Head of caudate nucleus (tissue), 42 donors: ENCODE measurements at regions of chr20 and their contacts with region 1.

Region 1: GRCh38 chr20:57596998-57597939 is 23.0 kb downstream of the ZBP1 start:
- DNase-seq: peak; percentile 45 to 89 (median 75)

Region 2: GRCh38 chr20:57374931-57375651 is 222.2 kb before region 1 on chr20:
- intact Hi-C with region 1: loop called (anchors 10 kb)
- DNase-seq: peak in 7 of 42 donors; percentile 21 to 59 (median 33)

Region 3: DNA sequence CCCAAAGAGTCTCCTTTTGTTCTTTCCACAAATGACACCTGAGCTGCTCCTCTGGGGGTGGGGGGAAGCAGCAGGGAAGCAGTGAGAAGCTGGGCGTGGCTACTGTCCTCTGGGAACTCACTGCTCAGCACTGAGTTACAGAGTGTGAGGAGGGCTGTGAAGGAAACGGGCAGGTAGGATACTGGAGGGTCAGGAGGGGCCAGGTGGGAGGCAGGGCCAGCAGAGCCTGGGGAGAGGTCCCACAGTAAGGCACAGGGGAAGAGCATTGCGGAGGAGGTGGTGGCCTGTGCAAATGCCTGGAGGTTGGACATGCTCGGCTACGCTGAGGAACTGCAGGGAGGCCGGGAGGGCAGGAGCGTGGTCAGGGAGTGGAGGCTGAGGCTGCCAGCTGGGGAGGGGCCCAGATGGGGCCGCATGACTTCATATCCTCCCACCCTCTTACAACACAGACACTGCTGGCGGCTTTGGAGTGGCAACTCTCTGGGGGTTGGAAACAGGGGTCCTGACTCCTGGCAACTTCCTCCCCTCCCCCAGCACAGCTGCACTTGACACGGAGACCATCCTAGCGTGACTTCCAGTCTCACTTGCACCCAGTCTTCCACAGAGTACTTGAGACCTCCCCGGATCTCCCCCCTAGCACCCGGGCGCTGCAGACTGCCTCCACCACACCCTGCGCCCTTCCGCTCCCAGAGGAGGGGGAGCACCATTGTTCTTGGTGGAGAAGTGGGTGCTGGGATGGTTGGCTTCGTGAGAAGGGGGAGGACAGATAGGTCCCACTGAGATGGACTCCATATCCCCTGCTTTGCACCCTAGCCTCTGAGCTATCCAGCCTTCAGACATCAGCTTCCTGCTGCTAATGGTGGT is 171.9 kb before region 1 on chr20:
- intact Hi-C with region 1: no loop called
- DNase-seq: no peak

Region 4: DNA sequence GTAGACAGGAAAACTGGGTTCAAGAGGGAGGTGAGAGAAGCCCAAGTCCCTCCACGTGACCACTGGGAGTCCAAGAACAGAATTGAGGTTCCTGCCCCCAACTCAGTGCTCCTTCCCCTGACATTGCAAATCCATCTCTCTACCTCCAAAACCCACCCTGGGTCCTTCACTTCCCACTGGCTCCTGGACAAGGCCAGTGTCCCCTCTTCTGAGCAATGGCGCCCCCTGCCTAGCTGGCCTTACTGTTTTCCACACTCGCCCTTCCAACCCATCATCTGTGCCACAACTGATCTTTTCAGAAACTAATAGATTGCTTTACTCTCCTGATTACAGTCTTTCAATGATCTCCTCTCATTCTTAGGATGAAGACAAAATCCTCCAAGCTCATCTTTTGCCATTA is 430.9 kb after region 1 on chr20:
- intact Hi-C with region 1: no loop called
- DNase-seq: peak in 5 of 42 donors; percentile 26 to 64 (median 40)

Region 5: GRCh38 chr20:58209652-58210397 is 612.6 kb after region 1 on chr20:
- intact Hi-C with region 1: loop called (anchors 2 kb)
- DNase-seq: peak; percentile 60 to 95 (median 88)